GM12878 (cell line): ENCODE measurements at regions of chr4 and their contacts with region 1.

Region 1: DNA sequence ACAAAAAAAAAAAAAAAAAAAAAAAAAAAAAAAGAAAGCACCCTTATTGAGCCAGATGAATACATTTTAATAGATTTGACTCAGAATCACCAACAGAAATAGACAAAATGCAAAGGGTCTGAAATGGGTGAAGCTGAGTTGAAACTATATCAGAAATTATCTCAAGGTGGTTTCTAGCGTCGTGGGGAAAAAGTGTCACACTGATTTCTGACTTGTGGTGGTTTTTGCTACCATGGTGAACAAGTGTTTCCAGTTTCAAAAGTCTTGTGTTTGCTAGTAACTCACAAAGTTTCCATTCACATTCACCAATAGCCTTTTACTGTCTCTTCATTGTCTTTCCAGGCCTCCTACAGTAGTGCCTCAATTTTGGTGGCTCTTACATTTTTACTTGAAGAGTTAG is 135.5 kb downstream of the ARHGAP24 start:
- DNase-seq: peak; percentile 94
- ATAC-seq: peak; percentile 94
- H3K4me3 ChIP-seq: no peak overlapping the region
- H3K27ac ChIP-seq: peak overlapping the region; percentile 13; the same call in 1 of the 2 replicates
- H3K4me1 ChIP-seq: peaks cover 13% of the 10 kb centered on the region
- H3K27me3 ChIP-seq: no peaks in the 10 kb centered on the region
- CTCF ChIP-seq: no peak
- EP300 ChIP-seq: peak; percentile 42 to 78; a peak in 3 of 4 replicates
- POLR2A ChIP-seq: no peak
- RAD21 ChIP-seq: no peak

Region 2: GRCh38 chr4:85734424-85734831 is 124.0 kb after region 1 on chr4:
- CTCF ChIA-PET with region 1: no interaction called
- POLR2A ChIA-PET with region 1: no interaction called
- RAD21 ChIA-PET with region 1: no interaction called
- SMC1A ChIA-PET with region 1: no interaction called
- in situ Hi-C with region 1: no loop called
- intact Hi-C with region 1: loop called (anchors 5 kb)
- DNase-seq: no peak
- ATAC-seq: no peak
- H3K4me3 ChIP-seq: no peak overlapping the region
- H3K27ac ChIP-seq: no peak overlapping the region
- H3K4me1 ChIP-seq: no peaks in the 10 kb centered on the region
- H3K27me3 ChIP-seq: no peaks in the 10 kb centered on the region
- CTCF ChIP-seq: no peak
- EP300 ChIP-seq: no peak
- POLR2A ChIP-seq: no peak
- RAD21 ChIP-seq: no peak